Activated naive CD4-positive, alpha-beta T cell treated with anti-CD3 and anti-CD28 coated beads, Interleukin-2, amount 10 ng/mL, durations not matched to agents 7 days and 5 days (primary cell): ENCODE measurements at regions of chr11 and their contacts with region 1.

Region 1: DNA sequence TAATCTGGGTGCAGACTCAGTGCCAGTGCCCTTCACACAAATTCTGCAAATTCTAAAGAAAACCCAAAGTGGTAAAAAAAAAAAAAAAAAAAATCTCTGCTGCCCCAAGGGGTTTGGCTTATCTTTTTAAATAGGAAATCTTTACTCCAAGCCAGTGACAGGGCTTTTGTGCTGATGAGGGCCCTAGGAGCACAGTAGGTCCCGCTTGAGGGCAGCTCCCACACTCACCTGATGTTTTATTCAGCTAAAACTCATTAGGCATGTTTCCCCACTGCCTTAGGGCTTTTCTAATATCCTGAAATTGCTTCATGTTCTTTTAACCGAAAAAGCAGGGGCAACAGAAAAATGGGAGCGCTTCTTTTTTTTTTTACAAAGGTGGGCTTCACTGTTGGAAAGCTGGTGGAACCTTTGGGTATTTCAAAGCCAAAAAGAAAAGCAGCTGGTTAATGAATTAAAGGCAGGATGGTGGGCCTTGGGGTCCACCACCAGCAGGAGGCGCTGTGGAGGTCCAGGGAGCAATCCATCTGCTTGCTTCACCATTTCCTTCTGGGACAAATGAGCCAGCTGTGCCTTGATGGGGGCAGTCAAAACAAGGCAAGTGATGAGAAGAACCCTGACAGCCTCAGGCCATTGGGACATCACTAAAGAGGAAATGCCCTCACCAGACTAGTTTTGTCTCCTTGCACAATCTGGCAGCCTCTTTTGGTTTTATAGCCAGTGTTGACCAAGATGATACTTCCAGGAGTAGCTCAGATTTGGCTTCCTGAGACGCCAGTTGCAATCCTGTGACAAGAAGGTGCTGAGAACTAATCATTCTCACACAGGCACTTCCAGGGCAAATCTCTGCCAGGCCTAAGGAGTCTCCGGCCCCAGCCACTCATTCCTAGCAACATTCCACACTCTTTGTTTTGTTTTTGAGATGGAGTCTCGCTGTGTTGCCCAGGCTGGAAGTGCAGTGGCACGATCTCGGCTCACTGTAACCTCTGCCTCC is 38.4 kb upstream of the WEE1 start:
- DNase-seq: peak; percentile 84
- H3K4me3 Mint-ChIP-seq: no peak overlapping the region
- H3K27ac Mint-ChIP-seq: no peak overlapping the region
- H3K4me1 Mint-ChIP-seq: peaks cover 3% of the 10 kb centered on the region
- H3K27me3 Mint-ChIP-seq: no peaks in the 10 kb centered on the region

Region 2: GRCh38 chr11:9550191-9550628 is 15.1 kb after region 1 on chr11:
- CTCF ChIA-PET with region 1: interaction called, 12 read pairs
- DNase-seq: no peak
- H3K4me3 Mint-ChIP-seq: no peak overlapping the region
- H3K27ac Mint-ChIP-seq: no peak overlapping the region
- H3K4me1 Mint-ChIP-seq: no peaks in the 10 kb centered on the region
- H3K27me3 Mint-ChIP-seq: no peaks in the 10 kb centered on the region

Region 3: DNA sequence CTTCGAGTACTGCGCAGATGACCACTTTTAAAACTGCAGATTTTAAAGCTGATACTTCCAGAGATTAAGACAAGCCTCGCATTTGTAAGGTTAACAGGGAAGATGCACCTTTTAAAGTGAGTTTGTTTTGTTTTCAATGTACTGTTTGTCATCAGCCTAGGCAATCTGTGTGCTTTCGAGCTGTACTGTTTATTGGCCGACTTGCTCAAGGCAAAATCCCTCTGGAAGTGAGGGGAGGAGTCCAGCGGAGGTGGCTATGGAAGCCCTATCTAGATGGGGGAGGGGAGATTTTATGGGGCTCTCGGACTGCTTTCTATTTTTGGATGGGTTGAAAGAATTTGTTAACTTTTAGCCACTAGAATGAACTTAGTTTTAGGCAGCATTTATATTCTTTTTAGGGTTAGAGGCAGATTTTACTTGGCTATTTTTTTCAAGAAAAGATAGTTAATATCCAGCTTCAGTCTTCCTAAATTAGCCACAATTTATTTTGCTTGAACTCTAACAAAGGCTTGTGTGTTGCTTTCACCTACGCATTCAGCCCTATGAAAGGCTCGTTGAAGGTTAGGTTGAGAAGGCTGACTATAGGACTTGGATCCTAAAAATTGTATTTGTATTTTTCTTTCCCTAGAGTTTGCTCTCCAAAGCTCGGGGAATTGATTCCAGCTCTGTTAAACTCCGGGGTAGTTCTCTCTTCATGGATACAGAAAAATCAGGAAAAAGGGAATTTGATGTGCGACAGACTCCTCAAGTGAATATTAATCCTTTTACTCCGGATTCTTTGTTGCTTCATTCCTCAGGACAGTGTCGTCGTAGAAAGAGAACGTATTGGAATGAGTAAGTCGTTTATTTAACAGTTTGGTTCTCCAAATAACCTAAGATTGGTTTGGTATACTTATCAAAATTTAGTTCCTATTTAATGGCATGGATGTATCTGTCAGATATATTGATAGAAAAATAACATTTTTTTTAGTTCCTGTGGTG is 40.5 kb after region 1 on chr11:
- CTCF ChIA-PET with region 1: interaction called, 17 read pairs
- DNase-seq: no peak
- H3K4me3 Mint-ChIP-seq: peak overlapping the region; percentile 93
- H3K27ac Mint-ChIP-seq: peak overlapping the region; percentile 82
- H3K4me1 Mint-ChIP-seq: peaks cover 52% of the 10 kb centered on the region
- H3K27me3 Mint-ChIP-seq: peaks cover 11% of the 10 kb centered on the region

Region 4: DNA sequence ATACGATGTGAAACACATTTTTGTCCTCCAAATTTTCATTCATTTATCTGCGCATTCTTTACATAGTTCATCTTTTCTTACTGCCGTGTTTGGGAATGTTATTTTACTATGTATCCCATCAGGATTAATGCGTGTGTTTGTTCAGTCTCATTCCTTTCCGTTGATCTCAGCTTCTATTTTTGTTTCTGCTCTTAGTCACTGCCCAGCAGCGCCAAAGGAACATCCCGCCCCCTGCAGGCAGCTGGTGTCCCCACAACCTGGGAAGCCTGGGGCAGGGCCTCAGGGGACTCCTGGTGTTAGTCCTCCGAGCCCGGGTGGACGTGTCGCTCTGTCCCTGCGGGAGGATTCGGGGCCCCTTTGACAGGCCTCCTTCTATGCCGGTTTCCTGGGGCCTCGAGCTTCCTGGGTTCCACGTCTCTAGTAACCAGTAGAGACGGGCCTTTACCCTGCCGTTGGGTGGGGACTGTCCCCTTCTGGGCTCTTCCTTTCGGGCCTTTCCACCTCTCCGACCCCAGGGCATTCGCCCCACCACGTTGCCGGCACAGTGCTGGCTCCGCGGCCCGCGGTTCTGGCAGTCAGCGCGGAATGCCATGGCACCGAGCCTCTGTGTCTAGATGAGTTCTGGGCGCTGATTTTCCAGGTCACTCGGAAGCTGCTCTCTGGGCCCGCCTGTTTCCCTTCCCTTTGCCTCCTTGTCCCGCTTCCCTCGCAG is 78.2 kb after region 1 on chr11:
- CTCF ChIA-PET with region 1: interaction called, 85 read pairs
- DNase-seq: peak; percentile 91
- H3K4me3 Mint-ChIP-seq: peak overlapping the region; percentile 84
- H3K27ac Mint-ChIP-seq: peak overlapping the region; percentile 98
- H3K4me1 Mint-ChIP-seq: peaks cover 30% of the 10 kb centered on the region
- H3K27me3 Mint-ChIP-seq: no peaks in the 10 kb centered on the region